GM23248 (cell line): ENCODE measurements at regions of chr12 and their contacts with region 1.

Region 1: DNA sequence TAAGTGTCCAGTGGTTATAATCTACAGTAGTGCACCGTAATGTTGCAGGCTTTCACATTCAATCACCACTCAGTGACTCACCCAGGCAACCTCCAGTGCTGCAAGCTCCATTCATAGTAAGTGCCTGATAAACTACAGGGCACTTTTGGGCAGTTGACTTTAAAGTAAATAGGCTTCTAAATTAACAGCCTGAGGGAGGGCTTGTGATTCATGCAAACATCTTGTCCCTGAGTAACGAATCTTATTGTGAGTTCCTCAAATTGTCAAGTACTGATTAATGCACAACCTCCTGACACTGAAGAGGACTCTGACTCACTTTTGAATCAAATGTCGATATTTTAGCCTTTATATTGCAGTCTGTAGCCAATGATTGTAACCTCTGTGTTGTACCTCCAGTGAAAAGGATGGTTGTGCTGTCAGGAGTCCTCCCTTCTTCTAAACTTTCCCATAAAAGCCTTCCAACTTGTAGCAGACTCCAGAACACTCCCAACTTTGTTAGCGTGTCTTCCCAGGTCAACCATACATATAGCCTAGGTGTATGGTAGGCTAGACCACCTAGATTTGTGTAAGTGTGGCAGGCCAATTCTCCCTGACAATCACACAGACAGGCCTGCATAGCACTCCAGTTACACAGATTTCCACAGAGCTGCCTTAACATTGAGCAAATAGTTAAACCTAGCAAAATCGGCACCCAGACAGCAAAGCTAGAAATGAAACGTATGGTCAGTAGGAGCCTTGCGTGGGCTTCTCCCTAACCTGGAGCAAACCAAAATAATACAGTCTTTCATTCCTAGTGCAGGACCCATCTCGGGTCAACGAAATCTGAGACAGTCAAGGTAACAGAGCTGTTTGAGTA is 54.9 kb upstream of the BICD1 start:
- DNase-seq: peak; percentile 95
- H3K4me3 ChIP-seq: no peak overlapping the region
- H3K27ac ChIP-seq: peak overlapping the region; percentile 66
- H3K4me1 ChIP-seq: peaks cover 12% of the 10 kb centered on the region
- H3K27me3 ChIP-seq: no peaks in the 10 kb centered on the region

Region 2: GRCh38 chr12:31393004-31393550 is 658.7 kb before region 1 on chr12:
- in situ Hi-C with region 1: loop called (anchors 10 kb)
- DNase-seq: no peak
- H3K4me3 ChIP-seq: no peak overlapping the region
- H3K27ac ChIP-seq: no peak overlapping the region
- H3K4me1 ChIP-seq: no peaks in the 10 kb centered on the region
- H3K27me3 ChIP-seq: no peaks in the 10 kb centered on the region

Region 3: GRCh38 chr12:31959161-31959700 is 92.6 kb before region 1 on chr12 and contains the start of gene RESF1:
- in situ Hi-C with region 1: no loop called
- DNase-seq: peak; percentile 92
- H3K4me3 ChIP-seq: peak within 1 kb of the TSS; percentile 100
- H3K27ac ChIP-seq: peak within 1 kb of the TSS; percentile 70
- H3K4me1 ChIP-seq: peaks cover 10% of the 10 kb centered on the region
- H3K27me3 ChIP-seq: no peaks in the 10 kb centered on the region
- total RNA-seq, gene RESF1: 6.3 and 8.3 TPM in 2 replicates

Region 4: DNA sequence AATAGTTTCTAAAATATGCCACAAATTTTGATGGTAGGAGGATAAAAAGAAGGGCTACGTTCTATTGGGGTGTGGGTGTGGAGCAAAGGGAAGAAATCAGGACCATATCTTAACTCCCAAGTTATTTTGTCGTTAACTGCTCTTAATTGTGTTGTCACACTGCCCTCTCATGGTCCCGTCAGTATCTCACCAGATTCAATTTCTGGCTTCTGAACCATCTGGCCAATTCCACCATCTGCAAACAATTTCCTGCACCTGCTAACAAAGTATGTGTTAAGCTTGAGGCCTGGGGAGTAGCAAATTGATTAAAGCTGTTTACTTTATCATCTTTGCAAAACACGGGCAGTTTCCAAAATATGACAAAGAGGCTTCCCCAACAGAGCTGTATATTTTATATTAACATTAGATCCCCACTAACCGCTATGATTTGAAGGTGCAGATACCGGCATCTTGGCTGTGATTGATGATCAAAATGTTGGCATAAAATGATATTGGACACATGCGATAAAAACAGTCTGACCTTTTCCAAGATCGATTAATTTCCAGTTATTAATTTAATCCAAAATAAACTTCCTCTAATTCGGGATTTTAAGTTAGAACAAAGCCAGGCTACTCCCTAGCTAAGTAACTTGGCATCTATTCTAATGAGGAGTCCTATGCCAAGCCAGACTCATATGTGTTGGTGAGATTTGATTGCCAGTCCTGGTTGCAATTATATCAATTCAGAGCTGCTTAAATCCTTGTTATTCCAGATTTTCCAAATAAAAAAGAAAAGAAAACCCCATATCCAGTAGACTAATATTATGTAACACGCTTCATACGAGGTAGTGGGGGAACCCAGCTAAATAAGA is 620.4 kb after region 1 on chr12:
- in situ Hi-C with region 1: loop called (anchors 25 kb)
- DNase-seq: peak; percentile 85
- H3K4me3 ChIP-seq: no peak overlapping the region
- H3K27ac ChIP-seq: no peak overlapping the region
- H3K4me1 ChIP-seq: peaks cover 8% of the 10 kb centered on the region; the same call in 1 of the 2 replicates
- H3K27me3 ChIP-seq: no peaks in the 10 kb centered on the region